ENCODE measurements at regions of chr12 and their contacts with region 1.

Region 1: GRCh38 chr12:132771126-132771838 is 9.7 kb upstream of the ANKLE2 start:
- DNase-seq: peak; percentile 87
- ATAC-seq: peak; percentile 56
- H3K4me3 ChIP-seq: peak overlapping the region in 4 of 5 experiments; percentile 7 to 31 (median 16)
- H3K4me3 Mint-ChIP-seq: peak overlapping the region; percentile 69
- H3K27ac ChIP-seq: peak overlapping the region; percentile 87 to 89
- H3K27ac Mint-ChIP-seq: peak overlapping the region; percentile 88
- H3K4me1 ChIP-seq: peaks cover 60 to 76% of the 10 kb centered on the region in 2 donors
- H3K4me1 Mint-ChIP-seq: peaks cover 61% of the 10 kb centered on the region
- H3K27me3 ChIP-seq: no peaks in the 10 kb centered on the region
- H3K27me3 Mint-ChIP-seq: no peaks in the 10 kb centered on the region
- CTCF ChIP-seq: no peak

Region 2: GRCh38 chr12:132445884-132446632 is 325.2 kb before region 1 on chr12:
- CTCF ChIA-PET with region 1: no interaction called
- POLR2A ChIA-PET with region 1: no interaction called
- intact Hi-C with region 1: no loop called
- DNase-seq: peak; percentile 81
- ATAC-seq: peak; percentile 6
- H3K4me3 ChIP-seq: peak overlapping the region; percentile 2 to 46 (median 42)
- H3K4me3 Mint-ChIP-seq: peak overlapping the region; percentile 83
- H3K27ac ChIP-seq: peak overlapping the region; percentile 96
- H3K27ac Mint-ChIP-seq: peak overlapping the region; percentile 99
- H3K4me1 ChIP-seq: peaks cover 59 to 87% of the 10 kb centered on the region in 2 donors
- H3K4me1 Mint-ChIP-seq: peaks cover 54% of the 10 kb centered on the region
- H3K27me3 ChIP-seq: no peaks in the 10 kb centered on the region
- H3K27me3 Mint-ChIP-seq: no peaks in the 10 kb centered on the region
- CTCF ChIP-seq: no peak

Region 3: DNA sequence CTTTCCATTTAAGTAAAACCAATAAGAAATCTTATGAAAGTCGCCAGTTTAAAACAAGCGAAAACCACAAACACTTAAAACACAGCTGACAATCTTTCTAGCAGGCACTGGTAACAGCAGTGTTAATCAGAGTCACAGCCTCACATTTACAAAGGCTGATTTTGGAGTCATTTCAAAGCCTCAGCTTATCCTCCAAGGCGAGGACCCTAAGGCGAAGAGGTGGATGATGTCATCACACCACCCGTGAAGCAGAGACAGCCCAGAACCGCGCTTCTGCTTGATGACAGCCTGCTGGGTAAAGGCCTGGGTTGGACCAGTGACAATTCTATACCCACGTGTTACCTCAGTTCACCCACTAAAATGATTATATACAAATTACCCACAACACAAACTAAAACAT is 47.3 kb after region 1 on chr12:
- CTCF ChIA-PET with region 1: interaction called, 3 read pairs
- POLR2A ChIA-PET with region 1: interaction called, 12 read pairs
- intact Hi-C with region 1: loop called (anchors 2 kb)
- DNase-seq: no peak
- ATAC-seq: no peak
- H3K4me3 ChIP-seq: no peak overlapping the region
- H3K4me3 Mint-ChIP-seq: peak overlapping the region; percentile 32
- H3K27ac ChIP-seq: peak overlapping the region in 1 of 2 donors; percentile 85
- H3K27ac Mint-ChIP-seq: peak overlapping the region; percentile 96
- H3K4me1 ChIP-seq: peaks cover 15 to 31% of the 10 kb centered on the region in 2 donors
- H3K4me1 Mint-ChIP-seq: peaks cover 38% of the 10 kb centered on the region
- H3K27me3 ChIP-seq: no peaks in the 10 kb centered on the region
- H3K27me3 Mint-ChIP-seq: no peaks in the 10 kb centered on the region
- CTCF ChIP-seq: no peak

Region 4: DNA sequence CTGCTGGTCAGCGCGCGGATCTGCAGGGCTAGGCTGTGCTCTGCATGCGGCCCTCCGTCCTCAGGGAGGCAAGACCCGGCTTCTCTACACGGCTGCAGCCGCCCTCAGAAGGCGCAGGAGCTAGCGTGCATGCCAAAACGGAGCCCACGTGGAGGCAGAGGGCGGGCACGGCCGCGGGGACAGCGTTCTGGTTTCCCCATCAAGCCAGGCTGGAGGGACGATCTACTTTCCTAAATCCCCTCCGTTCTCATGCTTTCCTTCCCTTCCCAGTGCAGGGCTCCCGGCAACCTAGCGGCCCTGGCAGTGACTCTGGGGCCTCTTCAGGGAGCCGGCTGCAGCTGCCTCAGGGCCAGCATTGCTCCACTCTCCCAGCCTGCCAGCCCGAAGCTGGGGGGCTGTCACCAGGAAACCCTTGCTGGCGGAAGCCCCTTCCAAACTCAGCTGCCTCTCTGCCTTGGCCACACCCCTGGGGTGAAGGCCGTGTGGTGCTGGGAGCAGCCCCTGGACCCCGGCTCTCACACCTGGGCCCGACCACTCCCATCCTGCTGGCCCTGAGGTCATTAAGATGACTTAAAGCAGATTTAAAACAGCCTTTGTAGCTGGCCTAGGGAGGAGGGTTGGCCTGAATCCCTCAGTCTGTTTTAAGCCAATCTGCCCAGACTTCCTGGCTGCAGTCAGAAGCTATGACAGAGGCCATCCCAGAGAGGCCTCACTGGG is 66.6 kb after region 1 on chr12:
- CTCF ChIA-PET with region 1: no interaction called
- POLR2A ChIA-PET with region 1: no interaction called
- intact Hi-C with region 1: no loop called
- DNase-seq: no peak
- ATAC-seq: no peak
- H3K4me3 ChIP-seq: no peak overlapping the region
- H3K4me3 Mint-ChIP-seq: no peak overlapping the region
- H3K27ac ChIP-seq: no peak overlapping the region
- H3K27ac Mint-ChIP-seq: no peak overlapping the region
- H3K4me1 ChIP-seq: peaks cover 0 to 3% of the 10 kb centered on the region in 2 donors
- H3K4me1 Mint-ChIP-seq: peaks cover 13% of the 10 kb centered on the region
- H3K27me3 ChIP-seq: no peaks in the 10 kb centered on the region
- H3K27me3 Mint-ChIP-seq: no peaks in the 10 kb centered on the region
- CTCF ChIP-seq: no peak

Region 5: DNA sequence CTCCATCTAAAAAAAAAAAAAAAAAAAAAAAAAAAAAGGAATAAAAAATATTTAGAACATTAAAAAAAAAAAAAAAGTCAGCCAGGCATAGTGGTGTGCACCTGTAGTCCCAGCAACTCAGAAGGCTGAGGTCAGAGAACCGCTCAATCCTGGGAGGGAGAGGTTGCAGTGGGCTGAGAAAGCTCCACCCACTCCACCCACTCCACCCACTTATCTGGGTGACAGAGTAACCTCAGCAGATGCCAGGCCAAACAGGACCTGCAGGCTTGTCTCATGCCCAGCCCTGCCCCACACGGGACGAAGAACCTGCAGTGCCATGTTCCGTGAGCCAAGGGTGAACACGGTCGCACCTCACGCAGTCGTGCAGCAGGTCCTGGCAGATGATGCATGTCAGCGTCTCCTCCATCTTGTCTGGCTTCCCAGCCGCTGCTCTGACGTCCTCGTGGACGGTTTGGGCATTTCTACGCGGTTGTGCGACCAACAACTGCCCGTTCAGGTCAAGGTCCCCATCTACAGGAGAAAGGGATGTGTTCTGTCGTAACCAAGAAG is 87.5 kb after region 1 on chr12:
- CTCF ChIA-PET with region 1: no interaction called
- POLR2A ChIA-PET with region 1: no interaction called
- intact Hi-C with region 1: no loop called
- DNase-seq: no peak
- ATAC-seq: no peak
- H3K4me3 ChIP-seq: no peak overlapping the region
- H3K4me3 Mint-ChIP-seq: no peak overlapping the region
- H3K27ac ChIP-seq: no peak overlapping the region
- H3K27ac Mint-ChIP-seq: no peak overlapping the region
- H3K4me1 ChIP-seq: no peaks in the 10 kb centered on the region
- H3K4me1 Mint-ChIP-seq: no peaks in the 10 kb centered on the region
- H3K27me3 ChIP-seq: no peaks in the 10 kb centered on the region
- H3K27me3 Mint-ChIP-seq: no peaks in the 10 kb centered on the region
- CTCF ChIP-seq: no peak